ENCODE measurements at regions of chr5 and their contacts with region 1.

Region 1: DNA sequence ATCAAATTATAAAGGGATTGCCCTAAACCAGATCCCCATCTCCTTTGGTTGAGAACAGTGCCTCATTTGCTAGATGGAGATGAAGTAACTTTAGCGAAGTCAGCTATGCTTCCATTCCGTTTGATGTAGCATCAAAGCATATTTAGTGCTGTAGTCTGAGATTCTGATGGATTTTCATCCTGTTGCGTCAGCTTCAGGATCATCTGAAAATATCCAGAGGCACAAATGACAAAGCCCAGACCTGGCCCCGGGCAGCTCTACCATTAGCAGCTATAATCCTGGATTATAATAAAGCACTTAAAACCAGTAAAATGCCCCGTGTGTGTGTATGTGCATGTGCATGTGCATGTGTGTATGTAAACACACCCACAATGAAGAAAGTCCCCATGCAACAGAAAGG is 44.7 kb downstream of the ERAP1 start:
- DNase-seq: no peak
- H3K4me3 ChIP-seq: no peak overlapping the region
- H3K27ac ChIP-seq: no peak overlapping the region
- H3K4me1 ChIP-seq: no peaks in the 10 kb centered on the region
- H3K27me3 ChIP-seq: no peaks in the 10 kb centered on the region
- CTCF ChIP-seq: no peak
- POLR2A ChIP-seq: no peak

Region 2: GRCh38 chr5:96279801-96280542 is 483.1 kb before region 1 on chr5:
- CTCF ChIA-PET with region 1: no interaction called
- POLR2A ChIA-PET with region 1: no interaction called
- dilution Hi-C with region 1: no loop called
- intact Hi-C with region 1: no loop called
- DNase-seq: peak; percentile 14
- H3K4me3 ChIP-seq: no peak overlapping the region
- H3K27ac ChIP-seq: no peak overlapping the region
- H3K4me1 ChIP-seq: peaks cover 9% of the 10 kb centered on the region
- H3K27me3 ChIP-seq: no peaks in the 10 kb centered on the region
- CTCF ChIP-seq: no peak
- POLR2A ChIP-seq: no peak

Region 3: GRCh38 chr5:96354237-96354636 is 408.8 kb before region 1 on chr5:
- CTCF ChIA-PET with region 1: no interaction called
- POLR2A ChIA-PET with region 1: no interaction called
- dilution Hi-C with region 1: no loop called
- intact Hi-C with region 1: no loop called
- DNase-seq: no peak
- H3K4me3 ChIP-seq: no peak overlapping the region
- H3K27ac ChIP-seq: no peak overlapping the region
- H3K4me1 ChIP-seq: no peaks in the 10 kb centered on the region
- H3K27me3 ChIP-seq: no peaks in the 10 kb centered on the region
- CTCF ChIP-seq: no peak
- POLR2A ChIP-seq: no peak

Region 4: GRCh38 chr5:97979740-97980139 is 1216.7 kb after region 1 on chr5:
- CTCF ChIA-PET with region 1: no interaction called
- POLR2A ChIA-PET with region 1: no interaction called
- dilution Hi-C with region 1: no loop called
- intact Hi-C with region 1: loop called (anchors 5 kb)
- DNase-seq: no peak
- H3K4me3 ChIP-seq: no peak overlapping the region
- H3K27ac ChIP-seq: peak overlapping the region; percentile 45
- H3K4me1 ChIP-seq: peaks cover 10% of the 10 kb centered on the region
- H3K27me3 ChIP-seq: no peaks in the 10 kb centered on the region
- CTCF ChIP-seq: no peak
- POLR2A ChIP-seq: no peak